Testis (tissue), 5 donors: ENCODE measurements at regions of chr12 and their contacts with region 1.

Region 1: GRCh38 chr12:452667-453210 is 7.0 kb upstream of the B4GALNT3 start:
- DNase-seq: peak; percentile 78
- H3K4me3 ChIP-seq: no peak overlapping the region
- H3K27ac ChIP-seq: no peak overlapping the region
- H3K4me1 ChIP-seq: no peaks in the 10 kb centered on the region
- H3K27me3 ChIP-seq: no peaks in the 10 kb centered on the region
- CTCF ChIP-seq: peak in 1 of 3 experiments; percentile 9
- POLR2A ChIP-seq: no peak

Region 2: DNA sequence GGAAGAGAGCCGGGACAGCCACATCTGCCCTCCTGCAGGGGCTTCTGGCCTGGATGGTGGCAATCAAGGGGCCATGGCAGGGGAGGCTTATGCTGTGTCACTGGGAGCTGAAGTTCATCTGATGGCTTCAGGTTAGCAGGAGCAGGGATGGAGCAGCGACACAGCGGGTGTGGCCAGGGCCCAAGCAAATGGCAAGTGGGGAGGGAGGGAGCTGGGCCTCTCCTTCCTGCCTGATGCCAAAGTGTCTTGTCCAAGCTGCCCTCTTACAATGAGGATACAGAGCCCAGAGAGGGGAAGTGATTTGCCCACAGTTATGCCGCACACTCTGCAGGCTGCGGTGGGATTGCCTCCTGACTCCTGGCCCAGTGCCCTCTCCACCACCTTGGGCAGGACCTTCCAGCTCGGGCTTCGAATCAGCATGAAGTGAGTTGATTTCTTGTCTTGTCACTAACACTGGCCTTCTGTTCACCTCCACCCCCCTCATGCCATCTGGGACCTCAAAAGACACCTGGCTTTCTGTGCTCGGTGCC is 334.9 kb before region 1 on chr12:
- intact Hi-C with region 1: no loop called
- DNase-seq: no peak
- H3K4me3 ChIP-seq: no peak overlapping the region
- H3K27ac ChIP-seq: no peak overlapping the region
- H3K4me1 ChIP-seq: no peaks in the 10 kb centered on the region
- H3K27me3 ChIP-seq: no peaks in the 10 kb centered on the region
- CTCF ChIP-seq: no peak
- POLR2A ChIP-seq: no peak

Region 3: GRCh38 chr12:546921-547845 is 94.4 kb after region 1 on chr12:
- intact Hi-C with region 1: loop called (anchors 5 kb)
- DNase-seq: peak; percentile 59
- H3K4me3 ChIP-seq: peak overlapping the region in 1 of 2 donors; percentile 30
- H3K27ac ChIP-seq: no peak overlapping the region
- H3K4me1 ChIP-seq: peaks cover 13% of the 10 kb centered on the region
- H3K27me3 ChIP-seq: no peaks in the 10 kb centered on the region
- CTCF ChIP-seq: peak; percentile 97 to 99 (median 98)
- POLR2A ChIP-seq: no peak